Activated naive CD4-positive, alpha-beta T cell treated with anti-CD3 and anti-CD28 coated beads for 36 hours (primary cell): ENCODE measurements at regions of chr11 and their contacts with region 1.

Region 1: DNA sequence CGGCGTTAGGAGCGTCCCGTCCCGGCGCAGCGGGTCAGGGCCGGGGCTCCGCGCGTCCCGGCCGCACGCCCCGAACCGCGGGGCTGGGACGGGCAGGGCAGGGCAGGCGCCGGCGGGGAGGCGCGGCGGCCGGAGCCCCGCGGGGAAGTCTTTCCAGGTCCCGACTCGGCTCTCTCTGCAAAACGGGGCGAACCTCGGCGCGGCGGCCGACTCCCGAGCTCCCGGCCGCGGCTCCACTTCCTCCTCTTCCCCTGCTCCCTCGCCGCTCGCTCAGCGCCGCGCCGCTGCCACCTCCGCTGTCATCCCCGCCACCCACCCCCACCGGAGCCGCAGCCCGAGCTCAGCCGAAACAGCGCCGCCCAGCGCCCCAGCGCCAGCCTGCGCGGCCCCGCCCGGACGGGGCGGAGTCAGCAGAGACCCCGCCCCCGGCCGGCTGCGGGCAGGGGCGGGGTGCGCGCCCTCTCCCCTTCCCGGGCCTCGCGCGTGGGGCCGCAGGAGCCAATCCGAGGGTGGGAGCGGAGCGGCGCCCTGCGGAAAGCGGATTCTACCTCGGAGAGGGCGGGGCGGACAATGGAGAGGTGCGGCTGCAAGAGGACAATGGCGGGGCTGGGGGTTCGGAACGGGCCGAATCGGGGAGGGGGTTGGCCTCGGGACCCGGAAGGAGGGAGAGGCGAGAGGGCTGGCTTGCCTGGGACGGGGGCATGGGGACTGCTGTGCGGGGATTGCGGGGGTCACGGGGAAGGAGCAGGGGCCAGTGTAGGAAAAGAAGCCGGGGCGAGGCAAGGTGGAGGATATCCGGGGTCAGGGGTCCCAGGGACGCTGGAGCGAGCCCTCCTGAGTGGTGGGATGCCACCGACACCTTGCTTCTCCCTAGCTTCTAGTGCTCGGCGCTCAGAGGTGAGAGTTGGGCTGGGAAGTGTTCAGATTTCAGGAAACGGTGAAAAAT is at the start of gene GDPD5:
- DNase-seq: peak; percentile 90
- H3K4me3 Mint-ChIP-seq: peak within 1 kb of the TSS; percentile 72
- H3K27ac Mint-ChIP-seq: no peak within 1 kb of the TSS
- H3K4me1 Mint-ChIP-seq: peaks cover 19% of the 10 kb centered on the region
- H3K27me3 Mint-ChIP-seq: peaks cover 5% of the 10 kb centered on the region
- total RNA-seq, gene GDPD5: 13.3 to 13.5 TPM

Region 2: DNA sequence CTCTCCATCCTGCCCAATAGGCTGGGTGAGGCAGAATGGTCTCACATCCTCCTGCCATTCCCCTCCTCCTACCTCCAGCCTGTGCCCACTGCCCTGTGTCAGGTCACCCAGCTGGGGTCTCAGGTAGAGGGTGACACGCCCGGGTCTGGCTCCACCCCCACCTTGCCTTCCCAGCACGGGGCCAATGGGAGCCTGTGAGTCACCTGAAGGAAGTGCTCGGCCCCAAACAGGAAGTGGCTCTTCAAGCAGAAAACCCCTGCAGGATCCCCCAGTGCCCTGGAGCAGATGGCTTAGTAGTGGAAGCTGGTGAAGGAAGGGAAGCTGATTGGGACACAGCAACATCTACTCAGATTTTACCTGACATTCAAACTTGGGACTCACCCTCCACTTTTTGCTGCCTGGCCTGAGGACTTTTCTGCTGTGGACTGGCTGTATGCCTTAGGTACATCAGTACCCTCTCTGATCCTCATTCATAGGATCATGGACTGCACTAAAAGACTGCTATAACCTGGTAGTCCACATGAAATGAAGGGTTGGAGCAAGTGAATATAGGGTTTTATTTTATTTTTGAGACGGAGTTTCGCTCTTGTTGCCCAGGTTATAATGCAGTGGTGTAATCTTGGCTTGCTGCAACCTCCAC is 33.6 kb before region 1 on chr11:
- CTCF ChIA-PET with region 1: no interaction called
- intact Hi-C with region 1: loop called (anchors 2 kb)
- DNase-seq: peak; percentile 89
- H3K4me3 Mint-ChIP-seq: peak overlapping the region; percentile 73
- H3K27ac Mint-ChIP-seq: peak overlapping the region; percentile 89
- H3K4me1 Mint-ChIP-seq: peaks cover 14% of the 10 kb centered on the region
- H3K27me3 Mint-ChIP-seq: no peaks in the 10 kb centered on the region

Region 3: DNA sequence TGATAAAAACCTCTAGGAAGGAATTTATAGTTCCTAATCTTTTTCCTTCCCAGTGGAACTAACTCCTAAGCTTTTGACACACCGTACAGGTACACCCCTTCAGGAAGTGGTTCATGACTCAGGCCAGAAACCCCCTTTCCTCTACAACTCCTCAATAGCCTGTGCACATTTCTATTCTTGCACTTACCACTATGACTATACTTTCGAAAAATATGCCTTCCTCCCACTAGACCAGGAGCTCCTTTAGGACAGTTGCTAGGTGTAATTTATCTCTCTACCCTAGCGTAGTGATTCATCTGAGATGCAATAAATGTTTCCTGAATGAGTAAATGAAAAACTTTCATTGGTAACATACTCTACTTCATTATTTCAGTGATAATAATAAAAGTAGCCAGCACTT is 128.4 kb after region 1 on chr11:
- CTCF ChIA-PET with region 1: no interaction called
- intact Hi-C with region 1: no loop called
- DNase-seq: peak; percentile 33
- H3K4me3 Mint-ChIP-seq: no peak overlapping the region
- H3K27ac Mint-ChIP-seq: no peak overlapping the region
- H3K4me1 Mint-ChIP-seq: peaks cover 11% of the 10 kb centered on the region
- H3K27me3 Mint-ChIP-seq: peaks cover 9% of the 10 kb centered on the region